ENCODE measurements at regions of chr7 and their contacts with region 1.

Region 1: GRCh38 chr7:38215735-38216670 is 38.0 kb downstream of the STARD3NL start:
- DNase-seq: peak; percentile 87 to 95 (median 94)
- H3K4me3 ChIP-seq: peak overlapping the region in 1 of 7 experiments; percentile 18
- H3K27ac ChIP-seq: no peak overlapping the region
- H3K4me1 ChIP-seq: peaks cover 9 to 35% (median 26%) of the 10 kb centered on the region in 4 experiments
- H3K27me3 ChIP-seq: no peaks in the 10 kb centered on the region

Region 2: GRCh38 chr7:37908221-37908788 is 307.7 kb before region 1 on chr7:
- CTCF ChIA-PET with region 1: interaction called, 83 read pairs
- POLR2A ChIA-PET with region 1: no interaction called
- DNase-seq: no peak
- H3K4me3 ChIP-seq: no peak overlapping the region
- H3K27ac ChIP-seq: no peak overlapping the region
- H3K4me1 ChIP-seq: no peaks in the 10 kb centered on the region
- H3K27me3 ChIP-seq: no peaks in the 10 kb centered on the region

Region 3: GRCh38 chr7:38179776-38180226 is 36.2 kb before region 1 on chr7:
- CTCF ChIA-PET with region 1: interaction called, 14 read pairs
- POLR2A ChIA-PET with region 1: no interaction called
- DNase-seq: no peak
- H3K4me3 ChIP-seq: peak overlapping the region in 6 of 7 experiments; percentile 80 to 97 (median 90)
- H3K27ac ChIP-seq: peak overlapping the region; percentile 79 to 90
- H3K4me1 ChIP-seq: peaks cover 17 to 45% (median 30%) of the 10 kb centered on the region in 4 experiments
- H3K27me3 ChIP-seq: no peaks in the 10 kb centered on the region

Region 4: DNA sequence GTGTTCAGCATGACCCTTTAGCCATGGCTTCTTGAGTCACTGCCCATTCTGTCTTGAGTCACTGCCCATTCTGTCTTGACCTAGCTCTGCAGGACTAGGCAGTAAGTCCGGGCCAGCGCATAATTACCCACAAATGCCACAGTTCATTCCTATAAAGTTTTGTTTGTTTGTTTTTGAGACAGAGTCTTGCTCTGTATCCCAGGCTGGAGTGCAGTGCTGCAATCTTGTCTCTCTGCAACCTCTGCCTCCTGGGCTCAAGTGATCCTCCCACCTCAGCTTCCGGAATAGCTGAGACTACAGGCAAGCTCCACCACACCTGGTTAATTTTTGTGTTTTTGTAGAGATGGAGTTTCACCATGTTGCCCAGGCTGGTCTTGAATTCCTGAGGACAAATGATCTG is 90.2 kb after region 1 on chr7:
- CTCF ChIA-PET with region 1: interaction called, 13 read pairs
- POLR2A ChIA-PET with region 1: no interaction called
- DNase-seq: no peak
- H3K4me3 ChIP-seq: no peak overlapping the region
- H3K27ac ChIP-seq: no peak overlapping the region
- H3K4me1 ChIP-seq: peaks cover 12 to 39% (median 15%) of the 10 kb centered on the region in 4 experiments
- H3K27me3 ChIP-seq: no peaks in the 10 kb centered on the region

Region 5: GRCh38 chr7:38327637-38328036 is 111.6 kb after region 1 on chr7:
- CTCF ChIA-PET with region 1: interaction called, 26 read pairs
- POLR2A ChIA-PET with region 1: no interaction called
- DNase-seq: peak; percentile 51 to 94 (median 83)
- H3K4me3 ChIP-seq: no peak overlapping the region
- H3K27ac ChIP-seq: peak overlapping the region; percentile 12 to 36
- H3K4me1 ChIP-seq: peaks cover 20 to 43% (median 32%) of the 10 kb centered on the region in 4 experiments
- H3K27me3 ChIP-seq: no peaks in the 10 kb centered on the region

Region 6: GRCh38 chr7:38375453-38375852 is 159.4 kb after region 1 on chr7:
- CTCF ChIA-PET with region 1: interaction called, 80 read pairs
- POLR2A ChIA-PET with region 1: interaction called, 3 read pairs
- DNase-seq: no peak
- H3K4me3 ChIP-seq: no peak overlapping the region
- H3K27ac ChIP-seq: no peak overlapping the region
- H3K4me1 ChIP-seq: peaks cover 0 to 2% (median 0%) of the 10 kb centered on the region in 4 experiments
- H3K27me3 ChIP-seq: no peaks in the 10 kb centered on the region